ENCODE measurements at regions of chr16 and their contacts with region 1.

Region 1: GRCh38 chr16:234468-235305 is at the start of gene FAM234A:
- DNase-seq: peak; percentile 91
- H3K4me3 Mint-ChIP-seq: peak within 1 kb of the TSS; percentile 98
- H3K27ac Mint-ChIP-seq: peak within 1 kb of the TSS; percentile 97
- H3K4me1 Mint-ChIP-seq: peaks cover 12% of the 10 kb centered on the region
- H3K27me3 Mint-ChIP-seq: no peaks in the 10 kb centered on the region
- total RNA-seq, gene FAM234A: 30.3 TPM in 2 replicates

Region 2: DNA sequence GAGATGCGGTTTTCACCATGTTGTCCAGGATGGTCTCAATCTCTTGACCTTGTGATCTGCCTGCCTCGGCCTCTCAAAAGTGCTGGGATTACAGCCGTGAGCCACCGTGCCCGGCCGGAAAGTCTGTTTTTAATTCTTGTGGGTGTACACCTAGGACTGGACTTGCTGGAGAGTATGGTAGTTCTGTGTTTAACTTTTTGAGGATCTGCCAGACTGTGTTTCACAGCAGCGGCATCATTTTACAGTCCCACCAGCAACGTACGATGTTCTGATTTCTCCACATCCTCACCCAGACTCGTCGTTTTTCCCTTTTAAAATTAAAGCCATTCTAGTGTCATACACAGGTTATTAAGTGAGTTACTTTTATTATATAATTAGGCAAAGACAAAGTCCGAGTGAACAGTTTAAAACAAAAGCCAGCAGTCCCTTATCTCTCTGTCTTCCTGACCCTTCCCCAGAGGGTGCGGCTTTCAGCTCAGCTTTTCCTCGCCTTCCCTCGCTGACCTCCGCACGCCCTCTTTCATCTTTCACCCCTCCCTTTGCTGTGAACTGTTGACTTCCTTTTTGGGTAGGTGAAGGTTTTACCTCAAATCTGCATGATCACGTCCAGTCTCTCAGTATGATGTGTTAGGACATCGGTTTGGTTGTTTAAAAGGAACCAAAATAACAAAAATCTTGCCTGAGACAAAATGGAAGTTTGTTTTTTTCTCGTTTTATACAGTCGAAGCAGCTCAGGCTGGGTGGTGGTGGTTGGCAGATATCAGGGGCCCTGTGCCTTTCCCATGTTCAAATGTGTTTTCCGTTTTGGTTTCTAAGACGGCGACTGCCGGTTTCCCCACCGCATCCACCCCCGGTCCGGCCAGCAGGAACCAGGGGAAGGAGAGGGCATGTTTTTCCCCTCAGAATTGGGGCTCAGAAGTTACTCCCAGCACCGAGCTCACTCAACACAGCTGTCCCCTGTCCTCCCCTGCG is 18.0 kb after region 1 on chr16:
- intact Hi-C with region 1: loop called (anchors 1 kb)
- DNase-seq: peak; percentile 30
- H3K4me3 Mint-ChIP-seq: peak overlapping the region; percentile 80
- H3K27ac Mint-ChIP-seq: peak overlapping the region; percentile 92
- H3K4me1 Mint-ChIP-seq: peaks cover 27% of the 10 kb centered on the region
- H3K27me3 Mint-ChIP-seq: no peaks in the 10 kb centered on the region

Region 3: DNA sequence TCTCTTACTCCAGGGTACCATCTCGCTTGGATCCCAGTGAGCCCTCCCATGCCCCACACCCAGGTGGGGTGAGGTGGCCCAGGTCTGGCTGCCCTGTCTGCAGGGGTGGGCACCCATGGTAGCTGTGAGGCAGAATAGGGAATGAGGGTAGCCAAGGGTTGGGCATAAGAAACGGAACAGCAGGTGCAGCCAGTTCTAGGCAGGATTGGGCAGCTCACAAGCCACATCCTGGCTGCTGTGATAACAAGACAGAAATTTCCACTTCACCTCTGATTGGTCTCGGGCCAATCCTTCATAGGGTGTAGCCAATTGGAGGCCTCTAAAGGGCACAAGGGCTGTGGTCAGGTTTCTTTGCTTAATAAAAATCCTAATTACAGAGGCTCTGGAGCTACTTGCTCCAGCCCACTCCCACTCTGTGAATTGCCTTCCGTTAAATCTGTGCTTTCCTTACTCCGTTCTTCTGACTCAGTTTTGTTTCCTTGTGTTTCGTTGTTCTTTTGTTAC is 44.2 kb after region 1 on chr16:
- intact Hi-C with region 1: no loop called
- DNase-seq: peak; percentile 52
- H3K4me3 Mint-ChIP-seq: no peak overlapping the region
- H3K27ac Mint-ChIP-seq: no peak overlapping the region
- H3K4me1 Mint-ChIP-seq: peaks cover 5% of the 10 kb centered on the region
- H3K27me3 Mint-ChIP-seq: peaks cover 33% of the 10 kb centered on the region

Region 4: GRCh38 chr16:352547-353403 is 118.1 kb after region 1 on chr16 and contains the start of gene AXIN1:
- intact Hi-C with region 1: loop called (anchors 1 kb)
- DNase-seq: peak; percentile 98
- H3K4me3 Mint-ChIP-seq: peak within 1 kb of the TSS; percentile 83
- H3K27ac Mint-ChIP-seq: peak within 1 kb of the TSS; percentile 91
- H3K4me1 Mint-ChIP-seq: peaks cover 19% of the 10 kb centered on the region
- H3K27me3 Mint-ChIP-seq: no peaks in the 10 kb centered on the region
- total RNA-seq, gene AXIN1: 28.1 and 29.1 TPM in 2 replicates